ENCODE measurements at regions of chr3 and their contacts with region 1.

Region 1: GRCh38 chr3:56219894-56220805 is 248.1 kb downstream of the ERC2 start:
- DNase-seq: no peak
- H3K4me3 ChIP-seq: no peak overlapping the region
- CTCF ChIP-seq: no peak

Region 2: GRCh38 chr3:56164436-56164835 is 55.7 kb before region 1 on chr3:
- in situ Hi-C with region 1: loop called (anchors 10 kb)
- DNase-seq: no peak
- H3K4me3 ChIP-seq: no peak overlapping the region
- CTCF ChIP-seq: no peak

Region 3: GRCh38 chr3:56254835-56255234 is 34.7 kb after region 1 on chr3:
- in situ Hi-C with region 1: no loop called
- DNase-seq: no peak
- H3K4me3 ChIP-seq: no peak overlapping the region
- CTCF ChIP-seq: no peak